Panc1 (cell line): ENCODE measurements at regions of chr13 and their contacts with region 1.

Region 1: GRCh38 chr13:100514788-100515409 is 73.7 kb downstream of the GGACT start:
- DNase-seq: peak; percentile 42
- ATAC-seq: peak; percentile 99
- H3K4me3 ChIP-seq: no peak overlapping the region
- H3K27ac ChIP-seq: peak overlapping the region; percentile 77
- H3K4me1 ChIP-seq: peaks cover 12% of the 10 kb centered on the region
- H3K27me3 ChIP-seq: no peaks in the 10 kb centered on the region
- CTCF ChIP-seq: peak; percentile 85

Region 2: GRCh38 chr13:99656092-99656745 is 858.7 kb before region 1 on chr13:
- CTCF ChIA-PET with region 1: no interaction called
- POLR2A ChIA-PET with region 1: no interaction called
- in situ Hi-C with region 1: no loop called
- intact Hi-C with region 1: loop called (anchors 10 kb)
- DNase-seq: peak; percentile 61
- ATAC-seq: peak; percentile 87
- H3K4me3 ChIP-seq: no peak overlapping the region
- H3K27ac ChIP-seq: peak overlapping the region; percentile 44; the same call in 1 of the 2 replicates
- H3K4me1 ChIP-seq: peaks cover 12% of the 10 kb centered on the region
- H3K27me3 ChIP-seq: no peaks in the 10 kb centered on the region
- CTCF ChIP-seq: peak; percentile 78

Region 3: DNA sequence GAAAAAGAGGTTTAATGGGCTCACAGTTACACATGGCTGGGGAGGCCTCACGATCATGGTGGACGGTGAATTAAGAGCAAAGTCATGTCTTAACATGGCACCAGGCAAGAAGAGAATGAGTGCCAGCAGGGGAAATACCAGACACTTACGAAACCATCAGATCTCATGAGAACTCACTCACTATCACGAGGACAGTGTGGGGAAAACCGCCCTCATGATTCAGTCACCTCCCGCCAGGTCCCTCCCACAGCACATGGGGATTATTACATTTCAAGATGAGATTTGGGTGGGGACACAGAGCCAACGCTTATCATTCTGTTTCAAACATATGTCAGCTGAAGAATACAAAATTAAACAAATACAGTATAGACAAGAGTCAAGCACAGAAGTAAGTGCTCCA is 260.9 kb before region 1 on chr13:
- CTCF ChIA-PET with region 1: no interaction called
- POLR2A ChIA-PET with region 1: no interaction called
- in situ Hi-C with region 1: no loop called
- intact Hi-C with region 1: loop called (anchors 10 kb)
- DNase-seq: no peak
- ATAC-seq: no peak
- H3K4me3 ChIP-seq: no peak overlapping the region
- H3K27ac ChIP-seq: no peak overlapping the region
- H3K4me1 ChIP-seq: no peaks in the 10 kb centered on the region
- H3K27me3 ChIP-seq: no peaks in the 10 kb centered on the region
- CTCF ChIP-seq: no peak

Region 4: GRCh38 chr13:100392709-100393641 is 121.9 kb before region 1 on chr13:
- CTCF ChIA-PET with region 1: no interaction called
- POLR2A ChIA-PET with region 1: no interaction called
- in situ Hi-C with region 1: no loop called
- intact Hi-C with region 1: loop called (anchors 5 kb)
- DNase-seq: peak; percentile 94
- ATAC-seq: peak; percentile 97
- H3K4me3 ChIP-seq: no peak overlapping the region
- H3K27ac ChIP-seq: peak overlapping the region; percentile 100
- H3K4me1 ChIP-seq: peaks cover 57% of the 10 kb centered on the region
- H3K27me3 ChIP-seq: no peaks in the 10 kb centered on the region
- CTCF ChIP-seq: no peak